ENCODE measurements at regions of chr17 and their contacts with region 1.

Region 1: DNA sequence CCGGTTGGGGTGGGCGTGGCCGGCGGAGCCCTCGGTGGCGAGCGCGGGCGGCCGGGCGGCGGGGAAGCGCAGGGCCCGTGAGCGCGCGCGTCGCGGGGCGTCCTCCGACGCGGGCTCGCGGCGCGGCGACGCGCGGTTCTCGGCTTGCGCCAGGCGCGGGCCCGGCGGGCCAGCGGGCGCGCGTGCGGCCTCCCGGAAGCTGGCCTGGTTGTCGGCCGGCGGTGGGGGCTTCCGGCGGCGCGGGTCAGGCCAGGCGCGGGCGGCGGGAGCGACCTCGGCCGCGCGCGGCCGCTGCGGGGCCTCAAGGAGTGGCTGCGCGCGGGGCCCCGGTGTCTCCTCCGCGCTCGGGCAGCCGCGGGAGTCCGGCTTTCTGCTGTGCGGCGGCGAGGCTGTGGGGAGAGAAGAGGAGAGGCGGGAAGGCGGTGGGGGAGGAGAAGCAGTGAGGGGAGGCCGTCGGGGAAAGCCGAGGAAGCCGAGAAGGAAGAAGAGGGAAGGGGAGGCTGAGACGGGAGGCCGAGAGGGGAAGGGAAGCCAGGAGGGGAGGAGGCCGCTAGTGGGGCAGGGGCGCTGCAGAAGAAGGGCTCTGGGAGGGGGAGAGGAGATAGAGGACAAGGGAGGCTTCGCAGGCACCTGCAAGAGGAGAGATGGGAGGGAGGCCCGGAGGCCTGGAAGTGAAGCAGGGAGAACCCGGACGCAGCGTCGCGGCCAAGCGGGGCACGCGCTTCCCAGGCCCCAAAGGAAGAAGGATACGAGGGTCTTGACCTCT is 2.5 kb downstream of the C17orf58 start:
- DNase-seq: peak; percentile 59 to 98 (median 73)

Region 2: DNA sequence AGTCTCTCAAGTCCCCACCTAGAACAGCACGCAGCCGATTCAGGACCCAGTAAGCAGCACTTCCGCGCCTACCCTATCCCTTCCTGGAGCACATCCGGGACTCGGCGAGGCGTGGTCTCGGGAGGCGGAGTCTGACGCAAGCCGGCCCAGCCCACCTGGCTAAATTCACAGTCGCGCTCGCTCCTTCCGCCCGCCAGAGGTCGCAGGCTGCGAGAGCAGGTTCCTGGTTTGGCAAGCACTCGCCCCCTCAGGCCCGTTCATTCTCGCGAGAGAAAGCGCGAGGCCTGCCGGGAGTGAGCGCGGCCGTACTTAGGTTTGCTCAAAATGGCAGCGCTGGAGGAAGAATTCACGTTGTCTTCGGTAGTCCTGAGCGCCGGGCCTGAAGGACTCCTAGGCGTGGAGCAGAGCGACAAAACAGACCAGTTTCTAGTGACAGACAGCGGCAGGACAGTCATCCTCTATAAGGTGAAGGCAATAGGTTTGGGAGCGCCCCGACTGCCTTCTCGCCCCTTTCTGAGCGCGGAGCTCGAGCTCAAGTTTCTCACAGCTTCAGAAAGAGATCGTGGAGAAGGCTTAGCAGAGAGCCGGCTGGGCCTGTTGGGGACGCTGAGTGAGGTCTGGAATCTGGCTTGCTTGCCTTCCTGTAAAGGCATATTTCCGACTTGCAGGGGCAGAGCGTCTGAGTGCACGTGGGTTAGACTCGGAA is 276.0 kb before region 1 on chr17 and contains the start of gene NOL11:
- intact Hi-C with region 1: loop called (anchors 5 kb)
- DNase-seq: peak; percentile 100

Region 3: DNA sequence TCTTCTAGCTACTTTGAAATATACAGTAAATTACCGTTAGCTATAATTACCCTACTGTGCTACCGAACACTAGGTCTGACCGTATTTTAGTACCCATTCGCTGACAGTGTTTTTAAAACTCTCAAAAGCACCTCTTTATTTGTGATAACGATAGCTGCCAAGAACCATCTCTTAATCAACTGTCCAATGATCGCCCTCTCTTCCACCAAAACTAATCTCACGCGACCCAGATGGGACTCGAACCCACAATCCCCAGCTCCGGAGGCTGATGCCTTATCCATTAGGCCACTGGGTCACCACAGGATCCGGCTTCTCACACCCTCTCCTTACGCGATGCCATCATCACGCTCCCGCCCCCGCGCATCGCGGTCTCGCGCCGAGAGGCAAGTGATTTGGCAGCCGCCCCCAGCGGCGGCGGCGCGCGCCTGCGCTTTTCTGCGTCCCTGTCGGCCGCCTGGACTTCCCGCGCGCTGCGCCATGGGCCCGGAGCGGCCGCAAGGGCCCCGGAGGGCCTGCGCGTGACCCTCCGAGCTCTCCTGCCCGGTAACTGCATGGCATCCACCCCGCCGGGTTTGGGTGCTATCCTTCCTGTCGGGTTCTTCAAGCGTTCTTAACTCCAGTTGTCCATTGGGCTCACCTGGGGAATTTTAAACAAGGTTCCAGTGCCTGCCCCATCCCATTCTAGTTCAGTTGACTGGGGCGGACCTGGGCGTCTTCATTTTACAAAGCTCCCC is 26.1 kb after region 1 on chr17:
- intact Hi-C with region 1: loop called (anchors 1 kb)
- DNase-seq: peak; percentile 94 to 99 (median 96)

Region 4: DNA sequence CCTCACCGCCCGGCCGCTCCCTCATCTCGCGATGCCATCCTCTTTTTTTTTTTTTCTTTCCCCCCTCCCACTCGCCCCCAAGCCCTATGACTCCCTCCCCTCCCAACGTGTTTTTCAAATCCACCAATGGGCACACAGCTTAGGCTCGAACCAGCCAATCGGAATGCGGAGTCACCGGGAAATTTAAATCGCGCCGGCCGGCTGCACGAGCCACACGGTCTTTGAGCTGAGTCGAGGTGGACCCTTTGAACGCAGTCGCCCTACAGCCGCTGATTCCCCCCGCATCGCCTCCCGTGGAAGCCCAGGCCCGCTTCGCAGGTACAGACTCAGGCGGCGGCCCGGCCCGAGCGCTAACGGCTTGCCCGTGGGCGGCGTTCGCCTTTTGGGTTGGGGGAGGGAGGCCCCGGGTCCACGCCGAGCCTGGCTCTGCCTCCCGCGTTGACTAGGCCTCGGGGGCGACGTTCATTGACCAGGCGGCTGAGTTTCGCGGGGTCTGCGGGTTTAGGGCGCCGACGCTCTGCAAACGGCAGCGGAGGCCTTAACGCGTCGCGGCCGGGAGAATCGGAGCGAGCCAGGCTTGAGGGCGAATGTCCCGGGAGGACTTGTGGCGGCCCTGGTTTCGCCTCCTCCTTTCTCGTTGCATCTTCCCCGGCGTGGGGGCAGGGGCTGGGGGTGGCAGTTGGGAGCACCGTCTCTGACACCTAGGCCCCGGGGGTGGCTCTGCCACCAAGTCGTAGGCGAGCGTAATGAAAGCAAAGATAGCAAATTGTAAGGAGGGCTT is 41.9 kb after region 1 on chr17 and contains the start of gene KPNA2:
- intact Hi-C with region 1: loop called (anchors 5 kb)
- DNase-seq: peak; percentile 86 to 98 (median 88)

Region 5: GRCh38 chr17:68255731-68256538 is 262.2 kb after region 1 on chr17:
- intact Hi-C with region 1: no loop called
- DNase-seq: no peak

Measured in posterior cingulate gyrus (tissue), 11 donors.